ENCODE measurements at regions of chr1 and their contacts with region 1.

Region 1: GRCh38 chr1:35298464-35298863 is 30.0 kb downstream of the ZMYM4 start:
- DNase-seq: peak in 1 of 2 donors; percentile 18
- ATAC-seq: peak; percentile 61 to 66
- H3K4me3 ChIP-seq: no peak overlapping the region
- H3K27ac ChIP-seq: no peak overlapping the region
- H3K4me1 ChIP-seq: peaks cover 10 to 18% of the 10 kb centered on the region in 2 donors
- H3K27me3 ChIP-seq: no peaks in the 10 kb centered on the region
- CTCF ChIP-seq: peak in 2 of 5 experiments; percentile 18 to 27
- POLR2A ChIP-seq: no peak

Region 2: GRCh38 chr1:35202048-35202719 is 96.3 kb before region 1 on chr1:
- in situ Hi-C with region 1: loop called in 1 of 4 experiments (anchors 10 kb)
- intact Hi-C with region 1: loop called (anchors 1 kb)
- DNase-seq: peak; percentile 24 to 55
- ATAC-seq: peak; percentile 92 to 98
- H3K4me3 ChIP-seq: no peak overlapping the region
- H3K27ac ChIP-seq: no peak overlapping the region
- H3K4me1 ChIP-seq: no peaks in the 10 kb centered on the region
- H3K27me3 ChIP-seq: no peaks in the 10 kb centered on the region
- CTCF ChIP-seq: peak; percentile 56 to 84 (median 74)
- POLR2A ChIP-seq: no peak

Region 3: DNA sequence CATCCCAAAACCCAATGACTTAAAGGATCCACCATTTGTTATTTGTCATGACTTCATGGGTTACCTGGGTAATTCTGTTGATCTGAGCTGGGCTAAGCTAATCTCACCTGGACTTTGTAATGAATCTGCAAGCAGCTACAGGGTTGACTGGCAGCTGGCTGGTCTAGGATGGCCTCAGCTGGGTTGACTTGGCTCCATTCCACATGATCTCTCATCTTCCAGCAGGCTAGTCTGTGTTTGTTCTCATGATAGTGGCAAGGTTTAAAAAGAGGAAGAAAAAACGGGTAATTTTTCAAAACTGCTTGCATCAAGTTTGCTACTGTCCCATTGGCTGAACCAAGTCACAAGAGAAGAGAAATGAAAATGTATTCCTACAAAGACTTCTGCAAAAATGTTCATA is 54.8 kb before region 1 on chr1:
- in situ Hi-C with region 1: no loop called
- intact Hi-C with region 1: no loop called
- DNase-seq: no peak
- ATAC-seq: no peak
- H3K4me3 ChIP-seq: no peak overlapping the region
- H3K27ac ChIP-seq: no peak overlapping the region
- H3K4me1 ChIP-seq: no peaks in the 10 kb centered on the region
- H3K27me3 ChIP-seq: no peaks in the 10 kb centered on the region
- CTCF ChIP-seq: no peak
- POLR2A ChIP-seq: no peak

Region 4: GRCh38 chr1:35398739-35399138 is 100.3 kb after region 1 on chr1:
- in situ Hi-C with region 1: no loop called
- intact Hi-C with region 1: no loop called
- DNase-seq: no peak
- ATAC-seq: no peak
- H3K4me3 ChIP-seq: no peak overlapping the region
- H3K27ac ChIP-seq: no peak overlapping the region
- H3K4me1 ChIP-seq: no peaks in the 10 kb centered on the region
- H3K27me3 ChIP-seq: no peaks in the 10 kb centered on the region
- CTCF ChIP-seq: no peak
- POLR2A ChIP-seq: no peak